ENCODE measurements at regions of chr11 and their contacts with region 1.

Region 1: DNA sequence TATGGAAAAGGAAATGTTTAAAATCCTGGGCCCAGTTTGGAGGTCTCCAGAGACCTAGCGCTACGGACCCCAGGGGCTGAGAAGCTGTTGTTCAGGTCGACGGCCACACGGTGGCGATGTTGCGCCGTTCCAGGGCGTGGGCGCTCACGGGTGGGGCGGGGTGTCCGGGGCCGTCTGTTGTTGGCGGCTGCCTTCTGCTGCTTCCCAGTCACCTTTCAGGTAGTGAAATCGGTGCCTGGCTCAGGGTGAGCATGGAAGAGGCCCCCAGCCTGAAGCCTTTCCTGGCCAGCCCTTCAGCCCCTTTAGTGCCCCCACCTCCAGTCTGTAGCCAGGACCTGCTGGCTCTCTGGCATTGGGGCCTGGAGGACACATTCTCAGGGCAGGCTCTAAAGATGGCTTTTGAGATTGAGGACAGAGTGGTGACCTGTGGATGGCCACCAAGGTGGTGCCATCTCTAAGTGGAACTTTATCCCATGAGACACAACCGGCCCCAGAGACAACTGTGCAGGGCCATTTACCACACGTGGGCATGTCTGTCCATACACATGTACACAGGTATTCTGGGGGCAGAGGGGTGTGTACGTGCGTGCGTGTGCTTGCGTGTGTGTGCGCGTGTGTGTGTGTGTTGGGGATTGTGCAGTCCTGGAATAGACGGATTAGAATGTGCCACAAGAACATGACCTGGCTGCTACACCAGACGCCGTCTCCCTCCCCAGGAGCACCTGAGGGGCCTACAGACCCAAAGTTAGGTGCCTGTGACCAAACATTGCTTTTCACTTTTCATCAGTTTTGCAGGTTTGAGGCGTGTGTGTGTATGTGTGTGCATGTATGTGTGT is 53.8 kb downstream of the ST14 start:
- DNase-seq: peak; percentile 79
- H3K4me3 Mint-ChIP-seq: no peak overlapping the region
- H3K27ac Mint-ChIP-seq: no peak overlapping the region
- H3K4me1 Mint-ChIP-seq: no peaks in the 10 kb centered on the region
- H3K27me3 Mint-ChIP-seq: no peaks in the 10 kb centered on the region

Region 2: GRCh38 chr11:130069684-130070108 is 143.7 kb before region 1 on chr11 and contains the start of gene APLP2:
- CTCF ChIA-PET with region 1: no interaction called
- POLR2A ChIA-PET with region 1: no interaction called
- intact Hi-C with region 1: no loop called
- DNase-seq: peak; percentile 98
- H3K4me3 Mint-ChIP-seq: peak within 1 kb of the TSS; percentile 93
- H3K27ac Mint-ChIP-seq: peak within 1 kb of the TSS; percentile 87
- H3K4me1 Mint-ChIP-seq: peaks cover 16% of the 10 kb centered on the region
- H3K27me3 Mint-ChIP-seq: peaks cover 3% of the 10 kb centered on the region
- total RNA-seq, gene APLP2: 49.2 to 53.4 TPM

Region 3: GRCh38 chr11:130094614-130095013 is 118.7 kb before region 1 on chr11:
- CTCF ChIA-PET with region 1: no interaction called
- POLR2A ChIA-PET with region 1: no interaction called
- intact Hi-C with region 1: no loop called
- DNase-seq: no peak
- H3K4me3 Mint-ChIP-seq: no peak overlapping the region
- H3K27ac Mint-ChIP-seq: no peak overlapping the region
- H3K4me1 Mint-ChIP-seq: peaks cover 3% of the 10 kb centered on the region
- H3K27me3 Mint-ChIP-seq: no peaks in the 10 kb centered on the region

Region 4: GRCh38 chr11:130227373-130227772 is 14.0 kb after region 1 on chr11:
- CTCF ChIA-PET with region 1: interaction called, 10 read pairs
- POLR2A ChIA-PET with region 1: no interaction called
- intact Hi-C with region 1: no loop called
- DNase-seq: no peak
- H3K4me3 Mint-ChIP-seq: no peak overlapping the region
- H3K27ac Mint-ChIP-seq: no peak overlapping the region
- H3K4me1 Mint-ChIP-seq: peaks cover 4% of the 10 kb centered on the region
- H3K27me3 Mint-ChIP-seq: no peaks in the 10 kb centered on the region

Region 5: DNA sequence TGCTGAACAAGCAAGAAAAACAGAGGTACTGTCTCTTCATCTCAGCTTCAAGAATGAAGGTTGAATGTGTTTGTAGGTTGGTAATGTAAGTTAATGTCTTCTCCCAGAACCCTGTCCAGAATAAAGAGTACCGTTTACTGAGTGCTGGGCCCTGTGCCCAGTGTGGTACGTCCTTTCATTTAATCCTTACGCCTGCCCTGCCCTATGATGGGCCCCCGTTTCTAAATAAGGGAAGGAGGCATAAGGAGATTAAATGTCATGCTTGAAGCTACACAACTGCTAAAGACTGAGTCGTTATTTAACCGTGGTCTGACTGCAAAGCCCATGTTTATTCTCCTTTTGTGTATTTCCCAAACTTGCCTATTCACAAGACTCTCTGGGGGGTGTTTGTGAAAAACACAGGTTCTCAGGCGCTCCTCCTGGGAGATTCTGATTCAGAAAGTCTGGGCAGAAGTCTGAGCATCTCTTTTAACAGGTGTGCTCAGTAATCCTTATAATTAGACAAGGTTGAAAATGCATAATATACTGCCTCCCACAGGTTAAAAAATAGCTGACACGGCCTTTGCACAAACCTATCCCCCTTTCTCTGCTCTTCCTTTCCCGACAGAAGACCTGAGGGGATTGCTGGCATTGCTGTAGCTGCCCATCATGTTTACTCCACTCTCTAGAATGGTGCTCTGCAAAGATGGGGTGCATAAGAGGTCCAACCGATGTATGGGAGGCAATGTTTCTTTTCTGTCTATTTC is 157.7 kb after region 1 on chr11:
- CTCF ChIA-PET with region 1: interaction called, 18 read pairs
- POLR2A ChIA-PET with region 1: no interaction called
- intact Hi-C with region 1: loop called (anchors 1 kb)
- DNase-seq: no peak
- H3K4me3 Mint-ChIP-seq: no peak overlapping the region
- H3K27ac Mint-ChIP-seq: no peak overlapping the region
- H3K4me1 Mint-ChIP-seq: no peaks in the 10 kb centered on the region
- H3K27me3 Mint-ChIP-seq: peaks cover 1% of the 10 kb centered on the region